HepG2 (cell line): ENCODE measurements at regions of chr1 and their contacts with region 1.

Region 1: DNA sequence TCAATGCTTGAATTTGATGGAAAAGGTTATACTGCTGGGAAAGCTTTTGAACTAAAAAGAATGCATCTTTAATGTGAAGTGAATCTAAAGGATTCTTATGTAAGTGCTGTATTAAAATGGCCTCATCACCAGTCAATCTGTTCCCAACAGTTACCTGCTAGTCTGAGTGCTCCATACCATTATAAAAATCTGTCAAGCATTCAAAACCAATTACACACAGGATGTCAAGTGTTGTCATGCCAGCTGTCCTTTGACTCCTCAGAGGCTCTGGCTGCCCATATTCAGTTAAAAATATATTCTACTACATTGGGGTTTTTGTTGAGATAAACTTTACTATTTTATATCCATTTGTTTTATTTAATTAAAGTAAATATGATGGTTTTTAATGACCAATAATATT is 1587.7 kb downstream of the AMY1C start:
- DNase-seq: no peak
- ATAC-seq: no peak
- H3K4me3 ChIP-seq: no peak overlapping the region
- H3K27ac ChIP-seq: no peak overlapping the region
- H3K4me1 ChIP-seq: no peaks in the 10 kb centered on the region
- H3K27me3 ChIP-seq: no peaks in the 10 kb centered on the region; a peak in 1 of 5 replicates
- CTCF ChIP-seq: no peak
- EP300 ChIP-seq: no peak
- POLR2A ChIP-seq: no peak
- RAD21 ChIP-seq: no peak

Region 2: GRCh38 chr1:105317976-105318375 is 19.4 kb before region 1 on chr1:
- CTCF ChIA-PET with region 1: no interaction called
- POLR2A ChIA-PET with region 1: no interaction called
- in situ Hi-C with region 1: no loop called
- intact Hi-C with region 1: no loop called
- DNase-seq: no peak
- ATAC-seq: no peak
- H3K4me3 ChIP-seq: no peak overlapping the region
- H3K27ac ChIP-seq: no peak overlapping the region
- H3K4me1 ChIP-seq: no peaks in the 10 kb centered on the region
- H3K27me3 ChIP-seq: no peaks in the 10 kb centered on the region
- CTCF ChIP-seq: no peak
- EP300 ChIP-seq: no peak
- POLR2A ChIP-seq: no peak
- RAD21 ChIP-seq: no peak

Region 3: DNA sequence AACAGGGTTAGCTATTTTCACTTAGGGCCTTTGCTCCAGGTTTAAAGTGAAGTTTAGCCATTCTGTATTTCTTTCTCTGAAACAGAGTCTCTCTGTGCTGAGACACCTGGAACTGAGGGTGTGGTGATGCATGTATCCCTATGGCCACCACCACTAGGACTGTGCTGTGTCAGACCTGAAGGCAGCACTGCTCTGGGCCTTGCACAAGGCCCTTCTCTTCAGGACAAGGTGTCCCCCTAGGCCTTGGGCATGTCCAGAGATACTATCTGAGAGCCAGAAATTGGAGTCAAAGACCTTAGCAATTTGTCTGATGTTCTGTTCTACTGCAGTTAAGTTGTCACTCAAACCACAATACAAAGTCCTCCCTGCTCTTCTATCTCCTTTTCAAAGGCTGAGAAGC is 61.5 kb after region 1 on chr1:
- CTCF ChIA-PET with region 1: no interaction called
- POLR2A ChIA-PET with region 1: no interaction called
- in situ Hi-C with region 1: no loop called
- intact Hi-C with region 1: loop called (anchors 2 kb)
- DNase-seq: no peak
- ATAC-seq: no peak
- H3K4me3 ChIP-seq: no peak overlapping the region
- H3K27ac ChIP-seq: no peak overlapping the region
- H3K4me1 ChIP-seq: no peaks in the 10 kb centered on the region
- H3K27me3 ChIP-seq: no peaks in the 10 kb centered on the region
- CTCF ChIP-seq: no peak
- EP300 ChIP-seq: no peak
- POLR2A ChIP-seq: no peak
- RAD21 ChIP-seq: no peak